GM12878 (cell line): ENCODE measurements at regions of chr6 and their contacts with region 1.

Region 1: GRCh38 chr6:37538107-37538506 is 38.4 kb upstream of the CCDC167 start:
- DNase-seq: no peak
- ATAC-seq: peak; percentile 93
- H3K4me3 ChIP-seq: no peak overlapping the region
- H3K27ac ChIP-seq: no peak overlapping the region
- H3K4me1 ChIP-seq: no peaks in the 10 kb centered on the region
- H3K27me3 ChIP-seq: no peaks in the 10 kb centered on the region
- CTCF ChIP-seq: peak; percentile 52 to 85 (median 77)
- EP300 ChIP-seq: no peak
- POLR2A ChIP-seq: no peak
- RAD21 ChIP-seq: peak; percentile 91

Region 2: DNA sequence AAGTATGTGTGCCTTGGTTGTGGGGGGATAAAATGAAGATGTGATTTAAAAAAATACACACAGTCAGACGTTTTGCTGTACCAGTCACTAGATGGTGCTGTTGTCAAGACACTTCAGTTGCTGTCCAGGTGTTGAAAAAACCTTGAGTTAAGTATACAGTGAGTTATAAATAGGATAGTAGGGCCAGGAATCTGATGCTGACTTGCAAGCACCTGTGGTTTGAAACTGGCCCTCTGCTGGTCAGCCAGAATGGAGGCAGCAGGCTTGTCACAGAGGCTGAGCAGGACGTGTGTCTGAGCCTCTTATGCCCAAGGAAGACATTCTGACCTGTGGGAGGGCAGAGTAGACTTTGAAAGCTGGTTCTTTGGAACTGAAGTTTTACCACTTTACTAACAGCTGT is 156.5 kb before region 1 on chr6:
- CTCF ChIA-PET with region 1: interaction called, 4 read pairs
- POLR2A ChIA-PET with region 1: no interaction called
- RAD21 ChIA-PET with region 1: no interaction called
- SMC1A ChIA-PET with region 1: interaction called, 11 read pairs
- in situ Hi-C with region 1: no loop called
- intact Hi-C with region 1: no loop called
- DNase-seq: peak; percentile 32
- ATAC-seq: peak; percentile 87
- H3K4me3 ChIP-seq: no peak overlapping the region
- H3K27ac ChIP-seq: no peak overlapping the region
- H3K4me1 ChIP-seq: peaks cover 3% of the 10 kb centered on the region; the same call in 1 of the 2 replicates
- H3K27me3 ChIP-seq: no peaks in the 10 kb centered on the region
- CTCF ChIP-seq: peak; percentile 72 to 85 (median 83)
- EP300 ChIP-seq: no peak
- POLR2A ChIP-seq: no peak
- RAD21 ChIP-seq: peak; percentile 76

Region 3: GRCh38 chr6:37499433-37500293 is 38.4 kb before region 1 on chr6 and contains the start of gene CCDC167:
- CTCF ChIA-PET with region 1: interaction called, 6 read pairs
- POLR2A ChIA-PET with region 1: no interaction called
- RAD21 ChIA-PET with region 1: interaction called, 12 read pairs
- SMC1A ChIA-PET with region 1: interaction called, 11 read pairs
- in situ Hi-C with region 1: no loop called
- intact Hi-C with region 1: no loop called
- DNase-seq: peak; percentile 96
- ATAC-seq: peak; percentile 89
- H3K4me3 ChIP-seq: peak within 1 kb of the TSS; percentile 84
- H3K27ac ChIP-seq: peak within 1 kb of the TSS; percentile 92
- H3K4me1 ChIP-seq: peaks cover 47% of the 10 kb centered on the region
- H3K27me3 ChIP-seq: no peaks in the 10 kb centered on the region
- CTCF ChIP-seq: no peak
- EP300 ChIP-seq: no peak
- POLR2A ChIP-seq: peak; percentile 72
- RAD21 ChIP-seq: no peak
- polyA plus RNA-seq, gene CCDC167: 323 to 380 TPM

Region 4: GRCh38 chr6:37525460-37526357 is 12.4 kb before region 1 on chr6:
- CTCF ChIA-PET with region 1: interaction called, 29 read pairs
- POLR2A ChIA-PET with region 1: no interaction called
- RAD21 ChIA-PET with region 1: interaction called, 3 read pairs
- SMC1A ChIA-PET with region 1: interaction called, 11 read pairs
- in situ Hi-C with region 1: no loop called
- intact Hi-C with region 1: no loop called
- DNase-seq: no peak
- ATAC-seq: peak; percentile 32; the same call in 2 of the 3 replicates
- H3K4me3 ChIP-seq: no peak overlapping the region
- H3K27ac ChIP-seq: no peak overlapping the region
- H3K4me1 ChIP-seq: peaks cover 15% of the 10 kb centered on the region
- H3K27me3 ChIP-seq: no peaks in the 10 kb centered on the region
- CTCF ChIP-seq: no peak
- EP300 ChIP-seq: no peak
- POLR2A ChIP-seq: no peak
- RAD21 ChIP-seq: no peak

Region 5: GRCh38 chr6:37576336-37576813 is 38.3 kb after region 1 on chr6:
- CTCF ChIA-PET with region 1: interaction called, 590 read pairs
- POLR2A ChIA-PET with region 1: no interaction called
- RAD21 ChIA-PET with region 1: interaction called, 13 read pairs
- SMC1A ChIA-PET with region 1: interaction called, 17 read pairs
- in situ Hi-C with region 1: no loop called
- intact Hi-C with region 1: no loop called
- DNase-seq: no peak
- ATAC-seq: no peak
- H3K4me3 ChIP-seq: no peak overlapping the region
- H3K27ac ChIP-seq: no peak overlapping the region
- H3K4me1 ChIP-seq: no peaks in the 10 kb centered on the region
- H3K27me3 ChIP-seq: no peaks in the 10 kb centered on the region
- CTCF ChIP-seq: no peak
- EP300 ChIP-seq: no peak
- POLR2A ChIP-seq: no peak
- RAD21 ChIP-seq: no peak

Region 6: GRCh38 chr6:37679539-37680476 is 141.7 kb after region 1 on chr6:
- CTCF ChIA-PET with region 1: interaction called, 7 read pairs
- POLR2A ChIA-PET with region 1: no interaction called
- RAD21 ChIA-PET with region 1: interaction called, 4 read pairs
- SMC1A ChIA-PET with region 1: interaction called, 11 read pairs
- in situ Hi-C with region 1: no loop called
- intact Hi-C with region 1: no loop called
- DNase-seq: peak; percentile 67
- ATAC-seq: peak; percentile 93
- H3K4me3 ChIP-seq: peak overlapping the region; percentile 25; the same call in 1 of the 2 replicates
- H3K27ac ChIP-seq: peak overlapping the region; percentile 59
- H3K4me1 ChIP-seq: peaks cover 18% of the 10 kb centered on the region
- H3K27me3 ChIP-seq: no peaks in the 10 kb centered on the region
- CTCF ChIP-seq: peak in 1 of 3 experiments; percentile 17; a peak in 1 of 6 replicates
- EP300 ChIP-seq: peak; percentile 66 to 70; a peak in 1 of 4 replicates
- POLR2A ChIP-seq: peak; percentile 44; the same call in 1 of the 2 replicates
- RAD21 ChIP-seq: no peak